Activated T-helper 1 cell treated with anti-CD3 and anti-CD28 coated beads, Interleukin-12 subunit alpha, Interleukin-12 subunit beta, Interleukin-2, Interleukin-4 antibody, amounts not matched to agents 30 ng/mL and 10 ng/mL and 1 ng/mL, durations not matched to agents 14 hours and 24 hours and 36 hours (primary cell): ENCODE measurements at regions of chr5 and their contacts with region 1.

Region 1: DNA sequence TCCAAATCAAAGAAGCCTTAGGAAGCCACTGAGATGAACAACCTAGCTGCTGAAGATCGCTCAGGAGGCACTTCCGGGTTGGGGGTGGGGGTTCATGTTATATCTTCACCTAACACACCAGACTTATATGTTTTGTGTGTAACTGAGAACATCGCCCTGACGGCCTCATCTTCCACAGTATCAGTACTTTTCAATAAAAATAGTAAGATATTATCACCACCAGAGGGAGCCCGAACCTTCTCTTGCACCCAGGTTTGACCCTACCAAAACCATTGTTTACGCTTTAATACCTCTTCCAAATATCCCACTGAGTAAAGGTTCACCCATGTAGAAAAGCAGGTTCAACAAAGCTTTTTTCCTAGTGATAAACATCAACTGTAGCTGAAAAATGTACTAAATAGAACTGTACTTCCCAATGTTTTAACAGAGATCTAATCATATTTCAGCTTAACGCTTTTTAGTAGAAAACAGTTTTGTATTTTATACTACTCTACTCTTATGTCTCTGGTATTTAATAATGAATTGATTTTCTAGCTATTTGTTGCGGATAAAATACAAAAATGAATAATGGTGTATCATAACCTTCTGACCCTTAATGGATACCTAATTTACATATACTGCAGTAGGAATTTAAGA is 244.0 kb downstream of the EPB41L4A start:
- DNase-seq: no peak
- H3K4me3 Mint-ChIP-seq: no peak overlapping the region
- H3K27ac Mint-ChIP-seq: no peak overlapping the region
- H3K4me1 Mint-ChIP-seq: no peaks in the 10 kb centered on the region
- H3K27me3 Mint-ChIP-seq: peaks cover 19% of the 10 kb centered on the region

Region 2: GRCh38 chr5:111320953-111321352 is 854.1 kb before region 1 on chr5:
- intact Hi-C with region 1: no loop called
- DNase-seq: no peak
- H3K4me3 Mint-ChIP-seq: no peak overlapping the region
- H3K27ac Mint-ChIP-seq: no peak overlapping the region
- H3K4me1 Mint-ChIP-seq: peaks cover 41% of the 10 kb centered on the region
- H3K27me3 Mint-ChIP-seq: no peaks in the 10 kb centered on the region

Region 3: GRCh38 chr5:112186401-112186990 is 11.4 kb after region 1 on chr5:
- intact Hi-C with region 1: loop called (anchors 1 kb)
- DNase-seq: no peak
- H3K4me3 Mint-ChIP-seq: no peak overlapping the region
- H3K27ac Mint-ChIP-seq: no peak overlapping the region
- H3K4me1 Mint-ChIP-seq: no peaks in the 10 kb centered on the region
- H3K27me3 Mint-ChIP-seq: peaks cover 25% of the 10 kb centered on the region

Region 4: GRCh38 chr5:112419986-112420864 is 245.1 kb after region 1 on chr5:
- intact Hi-C with region 1: loop called (anchors 2 kb)
- DNase-seq: peak; percentile 4
- H3K4me3 Mint-ChIP-seq: peak overlapping the region; percentile 24
- H3K27ac Mint-ChIP-seq: no peak overlapping the region
- H3K4me1 Mint-ChIP-seq: peaks cover 10% of the 10 kb centered on the region
- H3K27me3 Mint-ChIP-seq: peaks cover 64% of the 10 kb centered on the region

Region 5: DNA sequence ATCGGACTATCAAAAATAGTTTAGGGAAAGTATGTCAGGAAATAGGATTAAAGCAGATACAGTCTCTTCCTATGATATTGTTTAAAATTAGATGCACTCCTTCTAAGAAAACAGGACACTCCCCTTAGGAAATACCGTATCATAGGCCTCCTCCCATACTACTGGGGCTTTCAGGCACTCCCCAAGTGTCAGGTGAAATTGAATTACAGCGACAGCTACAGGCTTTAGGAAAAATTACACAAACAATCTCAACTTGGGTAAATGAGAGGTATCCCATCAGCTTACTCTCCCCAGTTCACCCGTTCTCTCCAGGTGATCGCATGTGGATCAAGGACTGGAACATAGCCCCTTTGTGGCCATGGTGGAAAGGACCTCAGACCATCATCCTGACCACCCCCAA is 354.4 kb after region 1 on chr5:
- intact Hi-C with region 1: loop called (anchors 1 kb)
- DNase-seq: no peak
- H3K4me3 Mint-ChIP-seq: no peak overlapping the region
- H3K27ac Mint-ChIP-seq: no peak overlapping the region
- H3K4me1 Mint-ChIP-seq: no peaks in the 10 kb centered on the region
- H3K27me3 Mint-ChIP-seq: peaks cover 6% of the 10 kb centered on the region